PC-9 (cell line): ENCODE measurements at regions of chrX and their contacts with region 1.

Region 1: DNA sequence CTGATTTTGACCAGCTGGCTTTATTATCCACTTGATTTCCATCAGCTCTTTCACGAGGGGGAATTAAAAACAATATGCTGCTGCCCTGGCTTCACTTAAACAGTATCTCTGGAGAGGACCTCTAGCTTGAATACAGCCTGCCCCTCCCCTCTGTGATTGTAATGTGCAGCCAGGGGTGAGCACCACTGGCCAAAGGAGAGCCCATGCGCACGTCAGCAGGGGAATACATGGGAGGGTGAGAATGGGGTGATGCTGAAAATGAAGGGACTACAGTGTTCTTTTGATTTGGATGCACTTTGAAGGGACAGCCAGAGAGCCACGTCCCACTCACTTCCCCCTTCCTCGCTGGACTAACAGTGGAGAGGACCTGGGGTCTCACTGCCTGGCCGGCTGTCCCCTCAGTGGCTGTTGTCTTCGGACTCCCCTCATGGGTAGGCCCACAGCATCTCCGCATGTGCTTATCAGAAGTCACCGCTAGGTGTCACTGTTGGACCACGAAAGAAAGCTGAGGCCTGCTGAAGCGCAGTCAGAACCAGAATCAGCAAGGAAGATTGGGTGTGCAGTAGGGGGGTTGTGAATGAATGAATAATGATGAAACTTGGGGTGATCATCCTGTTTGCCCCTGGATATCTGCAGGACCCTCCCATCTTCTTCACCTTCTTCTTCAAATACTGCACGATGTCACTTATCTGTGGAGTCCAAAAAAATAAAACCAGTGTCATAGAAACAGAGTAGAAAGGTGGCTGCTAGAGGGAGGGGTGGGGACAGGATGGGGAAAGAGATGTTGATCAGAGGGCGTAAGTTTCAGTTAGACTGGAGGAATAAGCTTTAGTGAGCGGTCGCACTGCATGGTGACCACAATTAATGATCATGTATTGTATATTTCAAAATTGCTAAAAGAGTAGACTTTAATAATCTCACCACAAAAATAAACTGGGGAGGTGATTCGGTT is 32.8 kb downstream of the CLCN4 start:
- DNase-seq: peak; percentile 50 to 62
- H3K4me3 ChIP-seq: no peak overlapping the region
- H3K27ac ChIP-seq: no peak overlapping the region
- H3K4me1 ChIP-seq: peaks cover 9% of the 10 kb centered on the region
- H3K27me3 ChIP-seq: no peaks in the 10 kb centered on the region
- CTCF ChIP-seq: peak; percentile 85

Region 2: GRCh38 chrX:10597871-10598270 is 408.3 kb after region 1 on chrX:
- CTCF ChIA-PET with region 1: no interaction called
- POLR2A ChIA-PET with region 1: no interaction called
- intact Hi-C with region 1: loop called (anchors 5 kb)
- DNase-seq: no peak
- H3K4me3 ChIP-seq: no peak overlapping the region
- H3K27ac ChIP-seq: no peak overlapping the region
- H3K4me1 ChIP-seq: no peaks in the 10 kb centered on the region
- H3K27me3 ChIP-seq: no peaks in the 10 kb centered on the region
- CTCF ChIP-seq: peak; percentile 56

Region 3: DNA sequence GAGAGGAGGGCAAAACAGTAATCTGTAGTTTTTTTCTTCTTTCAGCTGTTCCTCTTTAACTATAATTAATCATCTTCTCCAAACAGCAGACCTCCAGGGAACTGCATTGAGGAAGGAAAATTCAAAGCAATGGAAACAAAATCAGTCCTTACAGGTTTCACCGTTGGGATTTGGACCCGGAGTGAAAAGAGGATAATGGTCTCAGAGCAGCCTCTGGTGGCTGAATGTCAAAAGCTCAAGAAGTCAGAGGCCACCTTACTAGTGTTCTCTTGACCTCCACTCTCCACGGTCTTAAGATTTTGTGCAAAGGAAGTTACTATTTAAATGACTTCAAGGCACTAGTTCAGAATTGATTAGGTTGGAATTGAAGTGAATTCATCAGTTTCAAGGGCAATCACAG is 446.7 kb after region 1 on chrX:
- CTCF ChIA-PET with region 1: interaction called, 9 read pairs
- POLR2A ChIA-PET with region 1: no interaction called
- intact Hi-C with region 1: loop called (anchors 1 kb)
- DNase-seq: peak; percentile 36 to 47
- H3K4me3 ChIP-seq: no peak overlapping the region
- H3K27ac ChIP-seq: peak overlapping the region; percentile 84; the same call in 1 of the 2 replicates
- H3K4me1 ChIP-seq: peaks cover 47% of the 10 kb centered on the region
- H3K27me3 ChIP-seq: no peaks in the 10 kb centered on the region
- CTCF ChIP-seq: peak; percentile 70

Region 4: DNA sequence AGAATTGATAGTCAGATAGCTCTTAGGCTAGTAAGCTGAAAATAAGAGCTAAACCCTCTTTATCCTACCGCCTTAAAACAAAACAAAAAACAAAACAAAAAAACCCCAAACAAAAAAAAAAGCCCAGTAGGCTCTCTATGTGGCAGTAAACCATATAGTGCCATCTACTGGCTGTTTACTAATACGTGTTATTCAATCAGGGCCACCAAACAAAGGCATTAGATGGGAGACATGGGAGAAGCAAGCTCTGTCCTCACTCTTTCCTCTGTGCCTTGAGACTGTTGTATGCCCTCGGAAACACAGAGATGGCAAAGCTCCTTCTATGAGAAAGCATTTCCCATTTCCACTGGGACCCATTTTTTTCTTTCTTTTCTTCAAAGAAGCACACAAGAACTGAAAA is 579.6 kb after region 1 on chrX:
- CTCF ChIA-PET with region 1: no interaction called
- POLR2A ChIA-PET with region 1: no interaction called
- intact Hi-C with region 1: loop called (anchors 5 kb)
- DNase-seq: no peak
- H3K4me3 ChIP-seq: no peak overlapping the region
- H3K27ac ChIP-seq: no peak overlapping the region
- H3K4me1 ChIP-seq: no peaks in the 10 kb centered on the region
- H3K27me3 ChIP-seq: no peaks in the 10 kb centered on the region
- CTCF ChIP-seq: peak; percentile 60

Region 5: DNA sequence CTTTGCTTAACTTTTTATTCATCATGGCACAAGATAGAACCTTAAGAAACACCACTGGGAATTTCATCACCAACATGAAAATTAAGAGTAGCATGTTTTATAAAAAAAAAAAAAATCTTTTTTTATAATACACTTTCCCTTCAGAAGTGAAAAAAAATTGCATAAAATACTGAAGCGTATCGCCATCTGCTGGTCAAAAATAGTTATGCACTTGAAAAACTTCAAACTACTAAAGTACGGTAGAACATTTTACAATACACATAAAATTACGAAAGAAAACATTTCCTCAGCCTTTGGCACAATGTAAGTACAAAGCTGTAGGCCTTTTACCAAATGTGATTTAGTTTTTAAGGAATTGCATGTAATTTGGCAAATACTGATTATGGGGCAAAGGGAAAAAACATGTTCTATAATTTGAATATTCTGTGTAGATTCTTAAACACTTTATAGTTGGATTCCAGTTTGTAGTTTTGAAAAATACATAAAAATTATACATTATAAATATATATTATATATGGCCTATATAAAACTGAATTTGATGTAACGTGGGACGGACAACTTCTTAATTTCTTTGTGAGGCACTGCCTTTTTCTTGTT is 948.0 kb after region 1 on chrX:
- CTCF ChIA-PET with region 1: interaction called, 4 read pairs
- POLR2A ChIA-PET with region 1: no interaction called
- intact Hi-C with region 1: loop called (anchors 1 kb)
- DNase-seq: no peak
- H3K4me3 ChIP-seq: no peak overlapping the region
- H3K27ac ChIP-seq: no peak overlapping the region
- H3K4me1 ChIP-seq: no peaks in the 10 kb centered on the region
- H3K27me3 ChIP-seq: no peaks in the 10 kb centered on the region
- CTCF ChIP-seq: peak; percentile 70

Region 6: GRCh38 chrX:11533211-11533651 is 1343.6 kb after region 1 on chrX:
- CTCF ChIA-PET with region 1: no interaction called
- POLR2A ChIA-PET with region 1: no interaction called
- intact Hi-C with region 1: loop called (anchors 5 kb)
- DNase-seq: peak in 1 of 2 experiments; percentile 76
- H3K4me3 ChIP-seq: no peak overlapping the region
- H3K27ac ChIP-seq: no peak overlapping the region
- H3K4me1 ChIP-seq: no peaks in the 10 kb centered on the region
- H3K27me3 ChIP-seq: no peaks in the 10 kb centered on the region
- CTCF ChIP-seq: peak; percentile 88